ENCODE measurements at regions of chr3 and their contacts with region 1.

Region 1: GRCh38 chr3:22960105-22960984 is 242.8 kb upstream of the UBE2E2 start:
- DNase-seq: peak; percentile 20 to 37
- H3K4me3 ChIP-seq: no peak overlapping the region
- H3K27ac ChIP-seq: no peak overlapping the region
- H3K4me1 ChIP-seq: no peaks in the 10 kb centered on the region
- H3K27me3 ChIP-seq: no peaks in the 10 kb centered on the region
- CTCF ChIP-seq: peak; percentile 87

Region 2: DNA sequence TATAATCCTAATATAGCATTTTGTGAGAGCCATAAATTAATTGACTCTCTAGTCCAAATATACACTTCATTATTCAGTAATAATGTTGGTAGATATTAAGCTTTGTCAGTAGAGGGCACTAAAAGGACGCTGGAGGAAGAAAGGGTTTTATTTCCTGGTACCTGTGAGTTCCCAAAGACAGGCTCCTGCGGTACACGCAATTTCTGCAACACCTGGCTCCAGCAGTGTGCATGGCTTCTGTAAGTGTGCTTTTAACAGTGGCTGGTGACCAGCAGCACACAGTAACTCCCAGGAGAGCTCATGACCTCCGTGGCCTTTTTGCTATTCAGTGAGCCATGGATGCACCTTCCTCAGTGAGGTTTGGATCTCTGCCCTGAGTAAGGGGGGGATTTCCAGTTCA is 871.1 kb before region 1 on chr3:
- CTCF ChIA-PET with region 1: no interaction called
- POLR2A ChIA-PET with region 1: no interaction called
- intact Hi-C with region 1: loop called (anchors 10 kb)
- DNase-seq: peak in 1 of 2 experiments; percentile 29
- H3K4me3 ChIP-seq: no peak overlapping the region
- H3K27ac ChIP-seq: no peak overlapping the region
- H3K4me1 ChIP-seq: no peaks in the 10 kb centered on the region
- H3K27me3 ChIP-seq: no peaks in the 10 kb centered on the region
- CTCF ChIP-seq: peak; percentile 68

Region 3: GRCh38 chr3:22175947-22176346 is 784.4 kb before region 1 on chr3:
- CTCF ChIA-PET with region 1: no interaction called
- POLR2A ChIA-PET with region 1: no interaction called
- intact Hi-C with region 1: loop called (anchors 5 kb)
- DNase-seq: no peak
- H3K4me3 ChIP-seq: no peak overlapping the region
- H3K27ac ChIP-seq: no peak overlapping the region
- H3K4me1 ChIP-seq: no peaks in the 10 kb centered on the region
- H3K27me3 ChIP-seq: no peaks in the 10 kb centered on the region
- CTCF ChIP-seq: peak; percentile 49

Region 4: GRCh38 chr3:22565393-22565792 is 395.0 kb before region 1 on chr3:
- CTCF ChIA-PET with region 1: no interaction called
- POLR2A ChIA-PET with region 1: no interaction called
- intact Hi-C with region 1: loop called (anchors 1 kb)
- DNase-seq: no peak
- H3K4me3 ChIP-seq: no peak overlapping the region
- H3K27ac ChIP-seq: no peak overlapping the region
- H3K4me1 ChIP-seq: no peaks in the 10 kb centered on the region
- H3K27me3 ChIP-seq: no peaks in the 10 kb centered on the region
- CTCF ChIP-seq: no peak

Region 5: GRCh38 chr3:22659651-22660475 is 300.5 kb before region 1 on chr3:
- CTCF ChIA-PET with region 1: no interaction called
- POLR2A ChIA-PET with region 1: no interaction called
- intact Hi-C with region 1: no loop called
- DNase-seq: no peak
- H3K4me3 ChIP-seq: no peak overlapping the region
- H3K27ac ChIP-seq: no peak overlapping the region
- H3K4me1 ChIP-seq: no peaks in the 10 kb centered on the region
- H3K27me3 ChIP-seq: no peaks in the 10 kb centered on the region
- CTCF ChIP-seq: no peak

Region 6: DNA sequence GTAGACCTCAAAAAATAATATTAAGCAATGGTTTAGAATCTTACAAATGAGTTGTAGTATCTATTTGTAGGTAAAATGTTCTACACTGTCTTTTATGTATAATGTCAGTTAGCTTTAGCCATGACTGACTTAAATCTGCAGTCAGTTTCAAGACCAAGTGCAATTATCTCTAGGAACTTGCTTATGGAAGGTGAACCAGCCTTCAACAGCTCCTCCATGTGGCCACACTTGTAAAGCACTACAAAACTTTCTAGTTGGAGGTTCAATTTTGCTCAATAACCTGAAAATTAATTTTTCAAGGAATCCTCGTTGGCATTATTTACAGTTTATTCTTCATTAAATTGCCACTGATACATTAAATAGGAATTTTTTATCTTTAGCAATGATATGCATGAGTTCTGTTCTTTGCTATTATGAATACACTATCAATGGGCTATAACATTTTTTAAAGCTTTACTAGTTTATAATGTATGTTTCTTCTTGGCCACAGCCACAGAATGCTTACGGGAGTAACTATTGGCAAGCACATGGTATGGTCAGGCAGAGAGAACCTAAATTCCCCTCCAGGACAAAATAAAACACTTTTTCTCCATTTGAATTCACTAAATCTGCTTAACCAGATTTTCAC is 72.6 kb before region 1 on chr3:
- CTCF ChIA-PET with region 1: no interaction called
- POLR2A ChIA-PET with region 1: no interaction called
- intact Hi-C with region 1: loop called (anchors 1 kb)
- DNase-seq: peak in 1 of 2 experiments; percentile 4
- H3K4me3 ChIP-seq: no peak overlapping the region
- H3K27ac ChIP-seq: no peak overlapping the region
- H3K4me1 ChIP-seq: no peaks in the 10 kb centered on the region
- H3K27me3 ChIP-seq: no peaks in the 10 kb centered on the region
- CTCF ChIP-seq: peak; percentile 78

Region 7: GRCh38 chr3:23041918-23042696 is 81.8 kb after region 1 on chr3:
- CTCF ChIA-PET with region 1: interaction called, 4 read pairs
- POLR2A ChIA-PET with region 1: no interaction called
- intact Hi-C with region 1: loop called (anchors 5 kb)
- DNase-seq: peak; percentile 43 to 48
- H3K4me3 ChIP-seq: no peak overlapping the region
- H3K27ac ChIP-seq: no peak overlapping the region
- H3K4me1 ChIP-seq: peaks cover 13% of the 10 kb centered on the region; the same call in 1 of the 2 replicates
- H3K27me3 ChIP-seq: no peaks in the 10 kb centered on the region
- CTCF ChIP-seq: no peak

Region 8: DNA sequence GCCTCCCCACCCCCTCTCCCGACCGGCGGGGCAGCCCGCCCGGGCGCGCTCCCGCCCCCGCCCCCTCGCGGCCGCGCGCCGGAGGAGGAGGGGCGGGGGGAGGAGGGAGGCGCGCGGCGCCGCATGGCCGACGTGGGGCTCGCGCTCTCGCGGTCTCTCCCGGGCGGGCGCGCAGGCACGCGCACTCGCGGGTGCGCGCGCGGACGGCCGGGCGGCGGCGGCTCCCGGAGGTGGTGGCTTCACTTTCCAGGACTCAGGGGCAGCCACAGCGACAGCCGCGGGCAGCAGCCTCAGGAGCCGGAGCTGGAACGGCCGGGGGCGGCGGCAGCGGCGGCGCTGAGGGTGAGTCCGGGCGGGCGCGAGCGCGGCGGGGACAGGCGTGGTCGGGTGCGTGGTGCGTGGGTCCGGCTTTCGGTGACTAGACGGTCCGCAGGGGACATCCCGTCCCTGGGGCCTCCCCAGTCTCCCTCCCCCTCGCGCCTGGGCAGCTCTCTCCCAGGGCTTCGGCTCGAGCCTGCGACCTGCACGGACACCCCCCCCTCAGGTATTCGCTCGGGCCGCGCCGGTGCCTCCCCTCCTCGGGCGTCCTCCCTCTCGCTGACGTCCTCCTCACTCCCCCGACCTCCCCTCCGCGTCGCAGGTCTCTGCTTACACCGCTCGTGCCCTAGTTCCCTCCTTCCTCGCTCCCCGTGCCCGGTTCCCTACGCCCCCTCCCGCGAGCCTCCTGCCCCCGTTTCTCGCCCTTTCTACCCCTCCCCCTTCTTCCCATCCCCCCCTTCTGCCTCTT is 242.8 kb after region 1 on chr3 and contains the start of gene UBE2E2:
- CTCF ChIA-PET with region 1: no interaction called
- POLR2A ChIA-PET with region 1: no interaction called
- intact Hi-C with region 1: loop called (anchors 5 kb)
- DNase-seq: peak in 1 of 2 experiments; percentile 74
- H3K4me3 ChIP-seq: peak within 1 kb of the TSS; percentile 95
- H3K27ac ChIP-seq: 0 out of 2 replicates have a peak within 1 kb of the TSS, but pooled peaks have one; percentile 17
- H3K4me1 ChIP-seq: peaks cover 22% of the 10 kb centered on the region
- H3K27me3 ChIP-seq: peaks cover 8% of the 10 kb centered on the region; the same call in 1 of the 2 replicates
- CTCF ChIP-seq: no peak
- total RNA-seq, gene UBE2E2: 45.0 and 48.7 TPM in 2 replicates

Region 9: DNA sequence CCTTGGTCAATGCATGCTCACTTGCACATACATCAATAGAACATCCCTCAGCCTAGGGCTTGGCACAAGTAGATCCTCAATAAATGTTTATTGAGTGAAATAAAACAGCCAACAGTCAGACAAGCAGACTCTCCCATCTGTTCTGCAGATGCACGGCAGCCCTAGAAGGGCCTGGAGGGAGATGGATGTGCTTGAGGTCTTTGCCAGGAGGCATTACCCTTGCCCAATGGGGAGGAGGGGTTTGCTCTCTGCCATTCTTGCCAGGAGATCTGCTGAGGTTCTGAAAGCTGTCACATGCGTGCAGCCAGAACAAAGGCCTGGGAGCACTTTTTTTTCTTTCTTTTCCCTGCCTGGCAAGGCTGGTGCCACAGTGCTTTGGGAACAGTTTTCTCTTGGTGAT is 1883.6 kb after region 1 on chr3:
- CTCF ChIA-PET with region 1: no interaction called
- POLR2A ChIA-PET with region 1: no interaction called
- intact Hi-C with region 1: no loop called
- DNase-seq: no peak
- H3K4me3 ChIP-seq: no peak overlapping the region
- H3K27ac ChIP-seq: no peak overlapping the region
- H3K4me1 ChIP-seq: no peaks in the 10 kb centered on the region
- H3K27me3 ChIP-seq: no peaks in the 10 kb centered on the region
- CTCF ChIP-seq: no peak